Prostate gland (tissue), 2 donors: ENCODE measurements at regions of chr13 and their contacts with region 1.

Region 1: GRCh38 chr13:98142380-98143156 is at the start of gene FARP1:
- DNase-seq: peak; percentile 81
- H3K4me3 ChIP-seq: peak within 1 kb of the TSS; percentile 82 to 93
- H3K27ac ChIP-seq: peak within 1 kb of the TSS; percentile 74 to 85
- H3K4me1 ChIP-seq: peaks cover 5% of the 10 kb centered on the region
- H3K27me3 ChIP-seq: no peaks in the 10 kb centered on the region
- CTCF ChIP-seq: peak; percentile 37 to 84 (median 62)
- POLR2A ChIP-seq: no peak
- total RNA-seq, gene FARP1: 70.6 to 77.5 TPM

Region 2: DNA sequence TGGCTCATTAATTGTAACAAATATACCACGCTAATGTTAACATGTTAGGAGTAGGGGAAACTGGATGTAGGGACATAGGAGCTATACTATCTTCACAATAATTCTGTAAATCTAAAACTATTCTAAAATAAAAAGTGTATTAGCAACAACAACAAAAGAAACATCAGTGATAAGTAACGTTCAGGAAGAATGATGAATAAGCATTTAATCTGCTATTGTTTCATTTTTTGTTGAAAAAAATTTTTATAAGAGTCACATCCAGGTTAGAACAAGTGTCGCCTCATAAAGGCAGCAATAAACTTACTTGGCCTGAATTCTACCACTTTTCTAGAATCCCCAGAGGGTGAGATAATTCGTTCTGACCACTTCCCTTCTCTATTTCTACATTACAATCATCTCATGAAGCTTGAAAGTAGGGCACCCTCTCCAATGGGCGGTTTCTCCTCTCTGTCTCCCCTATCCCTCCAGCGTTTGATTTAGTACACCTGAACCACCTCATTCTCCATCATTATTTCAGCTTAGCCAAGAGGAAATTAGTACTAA is 442.2 kb before region 1 on chr13:
- intact Hi-C with region 1: no loop called
- DNase-seq: no peak
- H3K4me3 ChIP-seq: no peak overlapping the region
- H3K27ac ChIP-seq: no peak overlapping the region
- H3K4me1 ChIP-seq: no peaks in the 10 kb centered on the region
- H3K27me3 ChIP-seq: no peaks in the 10 kb centered on the region
- CTCF ChIP-seq: no peak
- POLR2A ChIP-seq: no peak

Region 3: DNA sequence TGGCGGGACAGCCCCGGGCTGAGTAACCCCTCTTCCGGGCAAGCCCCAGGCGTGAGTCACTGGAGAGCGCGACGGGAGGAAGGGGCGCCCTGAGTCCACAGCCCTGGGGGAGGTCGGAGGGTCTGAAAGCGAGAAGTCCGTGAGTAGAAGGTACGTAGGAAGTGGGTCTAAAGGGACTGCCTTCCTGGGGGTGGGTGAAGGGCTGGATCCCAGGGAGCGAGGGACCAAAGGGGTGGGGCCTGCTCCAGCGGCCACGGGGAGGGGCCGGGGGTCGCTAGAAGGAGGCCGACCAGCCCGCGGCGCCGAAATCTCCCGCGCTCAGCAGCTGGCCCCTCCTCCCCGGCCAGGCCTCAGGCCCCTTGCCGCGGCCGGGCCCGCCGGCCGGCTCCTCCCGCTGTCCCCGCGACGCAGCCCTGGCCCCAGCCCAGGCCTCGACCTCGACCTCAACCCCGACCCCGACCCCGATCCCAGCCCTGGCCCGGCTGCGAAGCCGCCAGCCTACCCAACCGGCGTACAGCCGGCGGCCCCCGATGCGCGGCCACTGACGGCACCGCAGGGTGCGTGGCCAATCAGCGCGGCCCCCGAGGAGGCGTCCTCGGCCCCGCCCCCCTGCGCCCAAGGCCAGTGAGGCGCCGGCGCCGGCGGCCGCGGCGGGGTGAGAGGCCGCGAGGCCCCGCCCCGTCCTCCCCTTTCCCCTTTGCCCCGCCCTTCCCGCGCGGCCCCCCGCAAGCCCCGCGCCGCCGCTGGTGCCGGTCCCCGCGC is 166.5 kb before region 1 on chr13:
- intact Hi-C with region 1: loop called (anchors 5 kb)
- DNase-seq: peak; percentile 85
- H3K4me3 ChIP-seq: peak overlapping the region; percentile 91 to 94
- H3K27ac ChIP-seq: peak overlapping the region; percentile 87 to 92
- H3K4me1 ChIP-seq: no peaks in the 10 kb centered on the region
- H3K27me3 ChIP-seq: no peaks in the 10 kb centered on the region
- CTCF ChIP-seq: peak in 2 of 4 experiments; percentile 21 to 28
- POLR2A ChIP-seq: peak; percentile 67

Region 4: GRCh38 chr13:98050041-98050466 is 92.5 kb before region 1 on chr13:
- intact Hi-C with region 1: no loop called
- DNase-seq: no peak
- H3K4me3 ChIP-seq: no peak overlapping the region
- H3K27ac ChIP-seq: no peak overlapping the region
- H3K4me1 ChIP-seq: no peaks in the 10 kb centered on the region
- H3K27me3 ChIP-seq: no peaks in the 10 kb centered on the region
- CTCF ChIP-seq: no peak
- POLR2A ChIP-seq: no peak

Region 5: GRCh38 chr13:98222081-98222554 is 79.5 kb after region 1 on chr13:
- intact Hi-C with region 1: loop called (anchors 10 kb)
- DNase-seq: peak; percentile 31
- H3K4me3 ChIP-seq: no peak overlapping the region
- H3K27ac ChIP-seq: peak overlapping the region; percentile 24 to 44
- H3K4me1 ChIP-seq: peaks cover 26% of the 10 kb centered on the region
- H3K27me3 ChIP-seq: no peaks in the 10 kb centered on the region
- CTCF ChIP-seq: no peak
- POLR2A ChIP-seq: no peak

Region 6: GRCh38 chr13:98349731-98350305 is 207.2 kb after region 1 on chr13:
- intact Hi-C with region 1: no loop called
- DNase-seq: no peak
- H3K4me3 ChIP-seq: no peak overlapping the region
- H3K27ac ChIP-seq: no peak overlapping the region
- H3K4me1 ChIP-seq: no peaks in the 10 kb centered on the region
- H3K27me3 ChIP-seq: no peaks in the 10 kb centered on the region
- CTCF ChIP-seq: no peak
- POLR2A ChIP-seq: no peak

Region 7: DNA sequence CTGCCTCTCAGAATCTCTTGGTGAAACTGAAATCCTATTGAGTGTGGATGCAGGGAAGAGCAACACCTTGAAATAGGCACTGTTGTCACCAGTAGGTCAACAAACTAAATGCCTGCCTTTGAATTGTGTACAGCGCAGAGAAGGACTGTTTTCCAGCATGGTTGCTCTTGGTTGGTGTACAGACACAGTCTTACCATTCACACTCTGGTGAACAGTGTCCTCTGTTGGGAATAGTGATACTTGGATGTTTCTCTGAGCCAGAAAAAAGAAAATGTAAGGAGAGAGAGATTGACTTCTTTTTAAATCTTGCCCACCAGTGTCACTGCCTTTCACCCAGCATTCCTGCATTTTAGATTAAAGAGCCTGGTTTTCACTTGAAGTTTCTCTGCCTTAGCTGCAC is 254.7 kb after region 1 on chr13:
- intact Hi-C with region 1: loop called (anchors 2 kb)
- DNase-seq: no peak
- H3K4me3 ChIP-seq: no peak overlapping the region
- H3K27ac ChIP-seq: no peak overlapping the region
- H3K4me1 ChIP-seq: no peaks in the 10 kb centered on the region
- H3K27me3 ChIP-seq: no peaks in the 10 kb centered on the region
- CTCF ChIP-seq: peak in 2 of 4 experiments; percentile 13 to 34
- POLR2A ChIP-seq: no peak

Region 8: GRCh38 chr13:98581971-98582680 is 439.6 kb after region 1 on chr13:
- intact Hi-C with region 1: no loop called
- DNase-seq: no peak
- H3K4me3 ChIP-seq: no peak overlapping the region
- H3K27ac ChIP-seq: no peak overlapping the region
- H3K4me1 ChIP-seq: no peaks in the 10 kb centered on the region
- H3K27me3 ChIP-seq: no peaks in the 10 kb centered on the region
- CTCF ChIP-seq: no peak
- POLR2A ChIP-seq: no peak

Region 9: GRCh38 chr13:98672944-98673545 is 530.5 kb after region 1 on chr13:
- intact Hi-C with region 1: loop called (anchors 5 kb)
- DNase-seq: peak; percentile 54
- H3K4me3 ChIP-seq: no peak overlapping the region
- H3K27ac ChIP-seq: no peak overlapping the region
- H3K4me1 ChIP-seq: no peaks in the 10 kb centered on the region
- H3K27me3 ChIP-seq: no peaks in the 10 kb centered on the region
- CTCF ChIP-seq: peak; percentile 63 to 92 (median 77)
- POLR2A ChIP-seq: no peak